ENCODE measurements at regions of chr10 and their contacts with region 1.

Region 1: DNA sequence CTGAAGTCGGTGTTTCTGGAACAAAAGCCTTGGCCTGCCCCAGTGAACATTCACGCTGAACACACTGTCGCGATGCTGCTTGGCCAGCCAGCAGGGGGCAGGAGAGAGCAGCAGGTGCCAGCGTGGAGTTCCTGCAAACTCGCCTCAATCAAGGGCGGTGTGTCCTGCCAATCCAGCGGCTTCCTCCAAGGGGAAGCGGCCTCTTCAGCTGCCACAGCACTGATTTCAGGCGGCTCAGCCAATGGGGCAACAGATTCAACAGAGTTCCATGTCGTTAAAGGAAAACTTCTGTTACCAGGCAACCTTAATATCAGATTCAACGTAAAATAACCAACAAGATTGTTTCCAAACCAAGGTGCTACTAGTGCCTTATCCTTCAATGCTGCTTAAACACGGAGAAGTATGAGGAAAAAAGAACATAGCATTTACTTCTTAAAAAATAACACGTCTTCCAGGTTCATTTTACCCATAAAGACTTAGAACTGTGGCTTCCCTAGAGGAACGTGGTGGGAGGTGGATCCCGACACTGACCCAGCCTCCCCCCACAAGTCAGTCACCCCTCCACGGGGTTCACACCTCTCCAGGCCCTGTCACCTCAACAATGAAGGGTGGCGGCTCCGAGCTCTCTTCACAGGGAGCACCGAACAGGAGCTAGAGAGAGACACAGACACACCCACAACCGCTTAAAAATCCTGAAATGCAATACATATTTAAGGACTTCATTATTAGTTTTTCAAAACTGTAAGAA is 178.2 kb downstream of the DIP2C start:
- DNase-seq: peak; percentile 91
- H3K4me3 Mint-ChIP-seq: no peak overlapping the region
- H3K27ac Mint-ChIP-seq: no peak overlapping the region
- H3K4me1 Mint-ChIP-seq: peaks cover 13% of the 10 kb centered on the region
- H3K27me3 Mint-ChIP-seq: no peaks in the 10 kb centered on the region

Region 2: GRCh38 chr10:788796-789748 is 277.8 kb after region 1 on chr10:
- CTCF ChIA-PET with region 1: no interaction called
- intact Hi-C with region 1: loop called (anchors 2 kb)
- DNase-seq: peak; percentile 53
- H3K4me3 Mint-ChIP-seq: peak overlapping the region; percentile 60
- H3K27ac Mint-ChIP-seq: no peak overlapping the region
- H3K4me1 Mint-ChIP-seq: peaks cover 2% of the 10 kb centered on the region
- H3K27me3 Mint-ChIP-seq: peaks cover 5% of the 10 kb centered on the region

Region 3: DNA sequence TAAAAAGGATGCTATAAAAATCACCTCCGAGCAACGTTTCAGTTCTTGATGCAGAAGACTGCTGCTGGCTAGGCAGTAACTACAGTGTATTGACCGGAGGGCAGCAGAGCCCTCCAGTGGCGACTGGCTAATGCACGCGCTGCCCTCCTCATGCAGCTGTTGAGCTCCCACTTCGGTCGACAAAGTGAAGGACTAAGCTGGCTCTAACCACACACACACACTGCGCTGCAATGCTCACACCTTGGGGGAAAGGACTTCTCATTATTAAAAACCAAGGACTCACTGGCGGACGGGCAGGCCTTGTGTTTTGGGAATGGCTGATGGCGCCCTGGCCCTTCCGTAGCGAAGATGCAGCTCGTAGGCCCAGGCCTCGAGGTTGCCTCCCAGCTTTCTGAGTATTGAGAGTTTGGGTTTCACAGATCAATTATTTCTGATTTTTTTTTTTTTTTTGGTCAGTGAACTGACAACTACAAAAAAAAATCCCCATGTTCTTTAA is 299.1 kb after region 1 on chr10:
- CTCF ChIA-PET with region 1: no interaction called
- intact Hi-C with region 1: loop called (anchors 1 kb)
- DNase-seq: no peak
- H3K4me3 Mint-ChIP-seq: no peak overlapping the region
- H3K27ac Mint-ChIP-seq: peak overlapping the region; percentile 46
- H3K4me1 Mint-ChIP-seq: no peaks in the 10 kb centered on the region
- H3K27me3 Mint-ChIP-seq: no peaks in the 10 kb centered on the region

Region 4: GRCh38 chr10:1074748-1075308 is 563.6 kb after region 1 on chr10:
- CTCF ChIA-PET with region 1: no interaction called
- intact Hi-C with region 1: loop called (anchors 5 kb)
- DNase-seq: no peak
- H3K4me3 Mint-ChIP-seq: no peak overlapping the region
- H3K27ac Mint-ChIP-seq: no peak overlapping the region
- H3K4me1 Mint-ChIP-seq: peaks cover 11% of the 10 kb centered on the region
- H3K27me3 Mint-ChIP-seq: no peaks in the 10 kb centered on the region

Region 5: GRCh38 chr10:1120801-1121211 is 609.5 kb after region 1 on chr10:
- CTCF ChIA-PET with region 1: no interaction called
- intact Hi-C with region 1: no loop called
- DNase-seq: no peak
- H3K4me3 Mint-ChIP-seq: no peak overlapping the region
- H3K27ac Mint-ChIP-seq: no peak overlapping the region
- H3K4me1 Mint-ChIP-seq: peaks cover 44% of the 10 kb centered on the region
- H3K27me3 Mint-ChIP-seq: no peaks in the 10 kb centered on the region